BJ (cell line): ENCODE measurements at regions of chr17 and their contacts with region 1.

Region 1: DNA sequence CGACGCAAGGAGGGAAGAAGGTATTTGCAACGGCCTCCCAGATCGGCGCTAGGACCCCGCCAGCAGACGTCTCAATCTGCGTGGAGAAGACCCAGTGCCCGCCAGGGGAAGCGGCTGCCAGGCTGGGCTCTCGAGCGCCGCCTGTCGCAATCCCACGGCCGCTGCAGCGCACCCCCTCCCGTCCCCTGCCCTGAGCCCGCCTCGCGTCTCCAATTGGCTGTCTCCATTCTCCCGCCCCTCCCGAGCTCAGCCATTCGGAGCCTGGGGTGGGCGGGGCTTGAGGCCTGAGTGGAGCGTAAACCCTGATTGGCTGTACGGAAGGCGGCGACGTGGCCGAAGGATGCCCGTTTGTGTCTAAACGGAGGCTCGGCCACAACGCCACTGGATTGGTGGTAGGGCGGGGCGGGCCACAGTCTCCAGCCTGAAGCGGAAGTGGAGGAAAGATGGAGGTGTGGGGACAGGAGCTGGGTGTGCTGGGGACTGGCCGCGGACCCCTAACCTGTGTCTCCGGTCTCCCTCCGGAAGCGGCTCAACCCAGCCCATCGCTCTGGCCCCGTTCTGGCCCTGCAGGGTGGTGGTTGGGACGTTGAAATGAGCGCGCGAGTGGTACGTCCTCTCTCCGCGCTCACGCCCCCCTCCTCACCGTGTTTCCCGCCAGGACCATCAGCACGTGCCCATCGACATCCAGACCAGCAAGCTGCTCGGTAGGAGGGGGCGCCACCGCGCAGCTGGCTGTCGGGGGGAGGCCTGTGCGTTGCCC is at the start of gene CDK5RAP3:
- DNase-seq: peak; percentile 91
- H3K4me3 ChIP-seq: peak within 1 kb of the TSS; percentile 72
- H3K27me3 ChIP-seq: no peaks in the 10 kb centered on the region
- CTCF ChIP-seq: peak; percentile 94
- polyA plus RNA-seq, gene CDK5RAP3: 76.6 and 98.1 TPM in 2 replicates

Region 2: DNA sequence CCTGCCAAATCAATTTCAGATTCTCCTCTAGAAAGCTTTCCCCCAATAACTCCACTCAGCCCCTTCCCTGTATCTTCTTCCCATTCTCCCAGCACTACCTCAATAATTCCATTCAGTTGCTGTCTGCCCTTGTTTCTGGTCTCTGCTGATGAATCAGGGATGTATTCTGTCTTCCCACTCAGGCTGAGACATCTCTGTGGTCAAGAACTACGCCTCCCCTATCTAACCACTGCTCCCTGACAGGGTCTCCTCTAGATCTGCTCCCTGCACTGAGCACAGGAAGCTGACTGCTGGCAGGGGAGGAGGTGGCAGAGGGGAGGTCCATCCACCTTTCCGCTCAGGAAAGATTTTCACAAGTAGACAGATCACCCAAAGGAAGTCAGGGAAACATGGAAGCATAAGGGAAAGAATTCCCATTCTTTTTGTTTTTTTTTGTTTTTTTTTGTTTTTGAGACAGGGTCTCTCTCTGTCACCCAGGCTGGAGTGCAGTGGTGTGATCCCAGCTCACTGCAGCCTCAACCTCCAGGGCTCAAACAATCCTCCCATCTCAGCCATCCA is 91.8 kb before region 1 on chr17:
- CTCF ChIA-PET with region 1: no interaction called
- POLR2A ChIA-PET with region 1: no interaction called
- DNase-seq: no peak
- H3K4me3 ChIP-seq: no peak overlapping the region
- H3K27me3 ChIP-seq: no peaks in the 10 kb centered on the region
- CTCF ChIP-seq: no peak

Region 3: DNA sequence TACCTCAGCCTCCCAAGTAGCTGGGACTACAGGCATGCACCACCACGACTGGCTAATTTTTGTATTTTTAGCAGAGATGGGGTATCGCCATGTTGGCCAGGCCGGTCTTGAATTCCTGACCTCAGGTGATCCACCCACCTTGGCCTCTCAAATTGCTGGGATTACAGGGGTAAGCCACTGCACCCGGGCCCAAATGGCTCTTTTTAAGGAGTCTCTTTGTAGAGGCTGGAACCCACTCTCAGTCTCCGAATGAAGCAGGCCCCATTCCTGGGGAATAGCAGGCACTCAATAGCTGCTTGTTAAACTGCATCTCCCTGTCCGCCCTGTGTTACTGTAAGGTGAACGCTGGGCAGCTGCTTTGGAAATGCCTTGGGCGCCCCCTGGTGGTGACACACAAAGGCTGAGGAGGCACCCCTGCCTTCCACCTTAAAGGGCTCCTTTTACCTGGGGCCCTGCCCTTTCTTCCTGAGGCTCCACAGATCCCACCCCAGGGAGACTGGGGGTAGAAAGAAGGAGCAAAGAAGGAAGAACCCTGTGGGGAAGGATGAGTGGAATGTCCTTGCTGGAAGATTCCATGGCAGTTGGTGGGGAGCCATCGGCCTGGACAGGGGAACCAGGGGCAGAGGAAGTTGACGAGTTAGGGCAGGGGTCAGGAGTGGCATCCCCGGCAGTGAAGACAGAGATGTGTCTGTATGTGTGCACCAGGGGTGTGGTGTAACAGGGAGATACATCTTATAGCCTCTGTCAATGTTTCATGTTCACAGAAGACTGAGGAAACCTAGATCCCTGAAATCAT is 81.0 kb before region 1 on chr17:
- CTCF ChIA-PET with region 1: interaction called, 10 read pairs
- POLR2A ChIA-PET with region 1: no interaction called
- DNase-seq: no peak
- H3K4me3 ChIP-seq: no peak overlapping the region
- H3K27me3 ChIP-seq: no peaks in the 10 kb centered on the region
- CTCF ChIP-seq: peak; percentile 94

Region 4: DNA sequence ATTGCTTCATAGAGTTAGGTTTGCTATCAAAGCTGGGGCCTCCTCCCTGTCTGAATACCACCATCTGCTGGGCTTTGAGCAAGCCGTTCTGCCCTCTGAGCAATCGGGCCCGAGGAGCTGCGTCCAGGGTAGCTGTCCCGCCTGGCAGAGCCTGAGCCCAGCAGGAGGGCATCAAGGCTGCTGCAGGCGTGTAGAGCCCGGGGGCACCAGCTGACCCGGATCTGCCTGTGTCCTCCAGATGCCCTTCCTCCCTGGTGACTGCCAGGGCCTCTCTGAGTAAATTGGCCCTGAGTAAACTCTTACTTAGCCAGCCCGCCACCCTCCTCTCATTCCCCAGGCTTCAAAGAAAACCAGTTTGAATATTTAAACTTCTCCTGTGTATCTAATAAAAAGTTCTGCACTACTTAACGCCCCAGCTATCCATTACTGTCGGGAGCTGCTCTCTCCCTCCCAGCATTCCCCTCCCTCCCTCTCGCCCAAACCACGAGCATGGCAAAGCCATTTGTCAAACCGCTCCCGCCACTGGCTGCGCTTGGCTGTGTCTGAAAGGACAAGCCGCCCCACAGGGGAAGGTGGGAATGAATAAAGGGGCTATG is 16.5 kb after region 1 on chr17:
- CTCF ChIA-PET with region 1: interaction called, 10 read pairs
- POLR2A ChIA-PET with region 1: no interaction called
- DNase-seq: no peak
- H3K4me3 ChIP-seq: no peak overlapping the region
- H3K27me3 ChIP-seq: no peaks in the 10 kb centered on the region
- CTCF ChIP-seq: 0 out of 2 replicates have a peak, but pooled peaks have one; percentile 15

Region 5: GRCh38 chr17:48047741-48048383 is 77.0 kb after region 1 on chr17 and contains the start of gene NFE2L1:
- CTCF ChIA-PET with region 1: interaction called, 4 read pairs
- POLR2A ChIA-PET with region 1: interaction called, 13 read pairs
- DNase-seq: peak; percentile 98
- H3K4me3 ChIP-seq: peak within 1 kb of the TSS; percentile 79
- H3K27me3 ChIP-seq: no peaks in the 10 kb centered on the region
- CTCF ChIP-seq: no peak
- polyA plus RNA-seq, gene NFE2L1: 255 and 281 TPM in 2 replicates